ENCODE measurements at regions of chr1 and their contacts with region 1.

Region 1: DNA sequence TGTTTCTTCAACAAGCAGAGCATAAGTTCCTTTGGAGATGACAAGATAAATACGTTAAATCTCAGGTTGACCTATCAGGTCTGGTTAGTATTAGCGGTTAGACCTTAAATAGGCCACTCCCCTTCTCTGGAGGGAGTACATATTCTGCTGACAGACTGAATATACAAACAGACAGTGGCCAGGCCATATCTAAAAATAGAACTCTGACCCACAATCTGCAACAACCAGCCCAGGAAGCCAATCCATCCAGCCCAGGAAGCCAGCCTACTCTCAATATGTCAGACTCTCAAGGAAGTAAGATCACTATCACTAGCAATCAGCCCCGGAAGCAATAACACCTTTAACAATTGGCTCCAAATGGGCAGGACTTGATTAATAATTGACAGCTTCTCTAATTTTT is 6.7 kb downstream of the IL20 start:
- DNase-seq: no peak
- H3K4me3 Mint-ChIP-seq: no peak overlapping the region
- H3K27ac Mint-ChIP-seq: no peak overlapping the region
- H3K4me1 Mint-ChIP-seq: peaks cover 24% of the 10 kb centered on the region
- H3K27me3 Mint-ChIP-seq: no peaks in the 10 kb centered on the region
- CTCF ChIP-seq: no peak

Region 2: GRCh38 chr1:206890690-206891089 is 18.6 kb after region 1 on chr1:
- CTCF ChIA-PET with region 1: interaction called, 5 read pairs
- POLR2A ChIA-PET with region 1: interaction called, 69 read pairs
- intact Hi-C with region 1: no loop called
- DNase-seq: peak; percentile 96
- H3K4me3 Mint-ChIP-seq: peak overlapping the region; percentile 45
- H3K27ac Mint-ChIP-seq: peak overlapping the region; percentile 95
- H3K4me1 Mint-ChIP-seq: peaks cover 91% of the 10 kb centered on the region
- H3K27me3 Mint-ChIP-seq: no peaks in the 10 kb centered on the region
- CTCF ChIP-seq: no peak

Region 3: GRCh38 chr1:206935491-206936067 is 63.4 kb after region 1 on chr1:
- CTCF ChIA-PET with region 1: no interaction called
- POLR2A ChIA-PET with region 1: no interaction called
- intact Hi-C with region 1: no loop called
- DNase-seq: peak; percentile 62
- H3K4me3 Mint-ChIP-seq: no peak overlapping the region
- H3K27ac Mint-ChIP-seq: no peak overlapping the region
- H3K4me1 Mint-ChIP-seq: peaks cover 8% of the 10 kb centered on the region
- H3K27me3 Mint-ChIP-seq: no peaks in the 10 kb centered on the region
- CTCF ChIP-seq: peak; percentile 59

Measured in MCF 10A (cell line).